Kidney (tissue), 22 donors: ENCODE measurements at regions of chr2 and their contacts with region 1.

Region 1: GRCh38 chr2:149561309-149561926 is 26.2 kb downstream of the MMADHC start:
- DNase-seq: peak in 2 of 5 donors; percentile 57 to 60
- H3K4me3 ChIP-seq: no peak overlapping the region
- H3K27ac ChIP-seq: no peak overlapping the region
- H3K4me1 ChIP-seq: peaks cover 0 to 3% (median 2%) of the 10 kb centered on the region in 3 donors
- H3K27me3 ChIP-seq: no peaks in the 10 kb centered on the region
- CTCF ChIP-seq: peak; percentile 64

Region 2: DNA sequence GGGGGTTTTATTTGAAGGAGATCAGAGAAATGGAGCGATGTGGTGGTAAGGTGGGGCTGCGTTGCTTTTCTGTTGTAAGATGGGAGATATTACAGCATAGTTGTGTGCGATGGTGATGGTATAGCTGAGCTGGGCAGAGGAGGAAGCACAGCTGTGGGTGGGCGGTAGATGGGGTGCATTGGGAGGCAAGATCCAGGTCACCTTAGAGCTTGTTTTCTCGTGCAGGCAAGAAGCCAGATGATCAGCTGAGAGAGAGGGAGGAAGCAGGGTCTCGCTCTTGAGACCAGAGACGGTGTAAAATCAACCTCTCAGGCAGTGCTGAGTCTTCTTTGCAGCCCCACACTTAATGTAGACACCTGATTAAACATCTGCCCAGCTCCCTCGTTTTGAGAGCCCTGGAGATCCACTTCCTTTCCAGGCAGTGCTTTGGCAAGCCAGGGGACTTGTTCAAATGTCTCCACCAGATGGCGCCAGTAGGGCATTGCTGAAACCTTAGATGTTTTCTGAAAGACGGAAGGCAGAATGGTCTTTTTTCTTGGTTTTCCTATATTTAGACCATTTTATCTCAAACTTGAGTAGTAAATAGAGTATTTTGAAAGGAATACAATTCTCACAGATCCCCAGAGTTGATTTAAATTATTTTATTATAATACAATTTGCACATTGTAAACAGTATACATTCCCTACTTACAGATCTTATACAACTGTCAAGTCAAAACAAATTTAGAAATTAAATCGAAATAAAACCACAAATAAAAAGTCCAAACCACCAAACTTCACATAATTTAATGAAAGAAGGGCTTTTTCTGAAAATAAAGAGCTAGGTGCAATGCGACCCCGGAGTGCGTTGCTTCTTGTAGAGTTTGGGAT is 544.1 kb before region 1 on chr2:
- intact Hi-C with region 1: loop called (anchors 5 kb)
- DNase-seq: peak; percentile 75 to 93 (median 85)
- H3K4me3 ChIP-seq: no peak overlapping the region
- H3K27ac ChIP-seq: no peak overlapping the region
- H3K4me1 ChIP-seq: peaks cover 0 to 7% (median 6%) of the 10 kb centered on the region in 3 donors
- H3K27me3 ChIP-seq: no peaks in the 10 kb centered on the region
- CTCF ChIP-seq: peak; percentile 85

Region 3: DNA sequence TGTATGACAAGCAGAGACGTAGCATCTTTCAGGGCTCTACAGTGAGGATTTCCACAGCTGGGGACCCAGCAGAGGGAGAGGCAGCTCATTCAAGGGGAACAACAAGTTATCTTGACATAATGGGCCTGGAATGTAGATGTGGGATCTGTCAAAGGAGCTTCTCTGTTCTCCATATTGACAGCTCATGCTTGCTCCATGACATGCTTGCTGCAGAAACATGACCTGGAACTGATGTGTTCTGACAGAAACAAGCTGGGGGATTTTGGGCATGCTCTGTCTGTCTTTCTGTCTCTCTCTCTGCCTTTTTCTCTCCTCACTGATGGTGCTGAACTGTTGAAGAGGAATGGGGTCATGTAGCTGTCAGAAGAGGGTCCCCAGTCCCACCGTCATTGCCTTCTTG is 53.4 kb before region 1 on chr2:
- intact Hi-C with region 1: no loop called
- DNase-seq: no peak
- H3K4me3 ChIP-seq: no peak overlapping the region
- H3K27ac ChIP-seq: no peak overlapping the region
- H3K4me1 ChIP-seq: no peaks in the 10 kb centered on the region
- H3K27me3 ChIP-seq: no peaks in the 10 kb centered on the region
- CTCF ChIP-seq: no peak